PC-9 (cell line): ENCODE measurements at regions of chr4 and their contacts with region 1.

Region 1: DNA sequence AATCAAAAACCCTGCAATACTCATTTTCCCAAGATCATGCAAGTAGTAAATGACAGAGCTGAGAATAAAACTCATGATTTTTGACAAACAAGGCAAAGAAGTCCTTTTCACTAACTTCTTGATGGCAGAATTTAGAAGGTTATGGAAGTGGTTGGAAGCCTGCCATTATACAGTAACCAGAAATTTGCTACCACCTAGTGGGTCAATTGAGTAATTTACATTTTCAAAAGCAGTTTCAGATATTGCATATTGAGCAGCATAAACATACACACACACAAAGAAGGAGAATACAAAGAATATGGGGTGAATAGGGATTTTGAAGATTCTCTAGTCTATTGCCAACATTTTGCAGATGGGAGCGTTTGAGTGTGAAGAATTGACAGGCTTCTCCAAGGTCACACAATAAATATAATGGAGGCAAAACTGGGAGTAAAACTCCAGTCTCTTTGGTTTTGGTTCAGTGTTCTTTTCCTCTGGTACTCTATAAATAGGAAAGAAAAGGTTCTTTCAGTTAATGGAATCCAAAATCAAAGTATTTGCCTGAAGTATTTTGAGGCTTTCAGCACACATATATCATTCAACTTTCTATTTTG is 70.2 kb downstream of the GC start:
- DNase-seq: no peak
- H3K4me3 ChIP-seq: no peak overlapping the region
- H3K27ac ChIP-seq: no peak overlapping the region
- H3K4me1 ChIP-seq: no peaks in the 10 kb centered on the region
- H3K27me3 ChIP-seq: no peaks in the 10 kb centered on the region
- CTCF ChIP-seq: peak; percentile 73

Region 2: GRCh38 chr4:70651864-70652506 is 1061.7 kb before region 1 on chr4:
- CTCF ChIA-PET with region 1: no interaction called
- POLR2A ChIA-PET with region 1: no interaction called
- intact Hi-C with region 1: loop called (anchors 2 kb)
- DNase-seq: peak in 1 of 2 experiments; percentile 37
- H3K4me3 ChIP-seq: peak overlapping the region; percentile 27; the same call in 1 of the 2 replicates
- H3K27ac ChIP-seq: no peak overlapping the region
- H3K4me1 ChIP-seq: no peaks in the 10 kb centered on the region
- H3K27me3 ChIP-seq: no peaks in the 10 kb centered on the region
- CTCF ChIP-seq: peak; percentile 64

Region 3: DNA sequence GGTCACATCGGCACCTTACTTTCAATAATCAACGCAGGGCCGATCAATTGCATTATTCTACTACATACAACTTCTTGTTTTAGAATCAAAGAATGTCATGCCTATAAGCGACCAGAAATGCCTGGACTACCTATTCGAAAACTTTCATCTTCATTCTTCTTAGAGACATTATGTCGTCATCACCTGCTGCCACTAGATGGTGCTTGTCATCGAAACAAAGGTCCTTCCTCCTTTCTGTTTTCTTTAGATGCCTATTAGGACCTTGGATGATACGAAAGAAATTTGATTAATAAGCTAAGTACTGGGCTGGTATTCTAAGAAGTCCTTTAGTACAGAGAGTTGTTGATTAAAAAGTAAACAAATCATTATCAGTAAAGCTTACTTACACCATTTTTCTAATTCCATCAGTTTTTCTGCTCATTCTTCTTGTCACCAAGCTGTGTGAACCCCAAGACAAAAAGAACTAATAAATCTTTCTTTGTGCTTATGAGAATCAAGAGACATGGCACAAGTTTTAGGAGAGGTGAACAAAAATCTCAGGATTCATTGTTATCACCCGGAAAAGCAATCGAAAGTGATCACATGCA is 529.4 kb before region 1 on chr4:
- CTCF ChIA-PET with region 1: no interaction called
- POLR2A ChIA-PET with region 1: no interaction called
- intact Hi-C with region 1: loop called (anchors 2 kb)
- DNase-seq: peak in 1 of 2 experiments; percentile 15
- H3K4me3 ChIP-seq: no peak overlapping the region
- H3K27ac ChIP-seq: no peak overlapping the region
- H3K4me1 ChIP-seq: no peaks in the 10 kb centered on the region
- H3K27me3 ChIP-seq: peaks cover 16% of the 10 kb centered on the region; the same call in 1 of the 2 replicates
- CTCF ChIP-seq: peak; percentile 61

Region 4: DNA sequence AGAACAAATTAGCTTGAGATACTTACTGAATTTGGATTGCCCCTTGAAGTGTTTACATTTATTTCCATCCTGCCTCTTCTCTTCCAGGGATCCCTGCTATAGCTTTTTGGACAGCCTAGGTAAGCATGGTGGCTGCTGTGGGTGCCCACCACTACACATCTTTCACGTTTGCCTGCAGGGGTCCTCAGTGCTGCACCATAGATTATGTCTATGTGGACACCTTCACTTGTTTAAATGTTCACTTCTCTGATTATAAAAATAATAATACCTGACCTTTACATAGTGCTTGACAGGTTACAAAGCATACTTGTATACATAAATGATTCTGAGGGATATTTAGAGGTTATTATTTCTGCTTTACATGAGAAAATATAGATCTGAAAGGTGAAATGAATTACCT is 442.8 kb before region 1 on chr4:
- CTCF ChIA-PET with region 1: no interaction called
- POLR2A ChIA-PET with region 1: no interaction called
- intact Hi-C with region 1: loop called (anchors 1 kb)
- DNase-seq: no peak
- H3K4me3 ChIP-seq: no peak overlapping the region
- H3K27ac ChIP-seq: no peak overlapping the region
- H3K4me1 ChIP-seq: no peaks in the 10 kb centered on the region
- H3K27me3 ChIP-seq: no peaks in the 10 kb centered on the region
- CTCF ChIP-seq: peak; percentile 53

Region 5: DNA sequence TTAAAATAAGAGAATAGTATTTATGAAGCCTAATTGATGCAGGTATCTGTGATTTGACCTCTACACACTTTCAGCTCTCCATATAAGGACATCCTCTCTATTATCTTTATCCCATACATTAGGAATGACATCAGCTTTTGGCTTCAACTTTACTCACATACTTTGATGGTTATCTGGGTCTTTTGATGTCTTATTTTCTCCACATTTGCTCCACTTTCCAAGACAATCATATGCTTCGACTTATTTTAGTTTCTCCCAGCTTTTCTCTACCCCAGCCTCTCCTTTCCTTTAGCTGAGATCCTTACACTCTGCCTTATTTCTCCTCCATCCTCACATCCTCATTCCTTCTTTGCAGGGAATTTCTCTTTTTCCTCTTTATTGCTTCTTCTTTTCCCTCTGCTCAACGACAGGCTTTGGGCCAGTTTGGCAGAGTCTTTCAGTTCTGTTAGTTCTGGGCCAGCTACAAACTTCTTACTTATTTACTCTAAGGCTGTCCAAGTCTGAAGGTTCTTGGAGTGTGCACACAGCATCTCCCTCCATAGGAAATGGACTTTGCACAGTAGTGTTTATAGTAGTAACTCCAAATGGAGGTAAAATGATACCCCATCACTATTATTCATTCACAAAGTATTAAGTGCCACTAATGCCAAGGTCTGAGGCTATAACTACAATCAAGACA is 324.4 kb before region 1 on chr4:
- CTCF ChIA-PET with region 1: no interaction called
- POLR2A ChIA-PET with region 1: no interaction called
- intact Hi-C with region 1: no loop called
- DNase-seq: no peak
- H3K4me3 ChIP-seq: no peak overlapping the region
- H3K27ac ChIP-seq: no peak overlapping the region
- H3K4me1 ChIP-seq: peaks cover 13% of the 10 kb centered on the region
- H3K27me3 ChIP-seq: no peaks in the 10 kb centered on the region
- CTCF ChIP-seq: no peak

Region 6: GRCh38 chr4:71607784-71608682 is 105.7 kb before region 1 on chr4:
- CTCF ChIA-PET with region 1: no interaction called
- POLR2A ChIA-PET with region 1: no interaction called
- intact Hi-C with region 1: loop called (anchors 2 kb)
- DNase-seq: peak in 1 of 2 experiments; percentile 94
- H3K4me3 ChIP-seq: peak overlapping the region; percentile 29; the same call in 1 of the 2 replicates
- H3K27ac ChIP-seq: peak overlapping the region; percentile 99
- H3K4me1 ChIP-seq: peaks cover 33% of the 10 kb centered on the region
- H3K27me3 ChIP-seq: no peaks in the 10 kb centered on the region
- CTCF ChIP-seq: no peak